ENCODE measurements at regions of chr3 and their contacts with region 1.

Region 1: DNA sequence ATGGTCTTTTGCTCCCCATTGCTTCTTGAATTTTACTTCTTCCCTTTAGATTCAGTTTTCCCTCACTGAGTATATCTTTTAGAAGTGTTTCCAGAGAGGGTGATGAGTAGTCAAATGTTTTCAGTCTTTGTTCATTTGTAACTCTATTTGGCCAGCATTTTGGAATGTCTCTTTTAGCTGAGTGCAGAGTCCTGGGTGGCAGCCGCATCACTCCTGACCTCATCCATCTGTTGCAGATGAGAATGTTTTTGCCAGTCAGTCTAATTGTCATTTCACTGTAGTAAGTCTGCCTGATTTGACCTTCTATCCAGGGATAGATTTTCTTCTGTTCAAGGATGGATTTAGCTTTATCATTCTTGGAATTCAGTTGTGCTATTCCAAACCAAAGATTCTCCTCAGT is 7.3 kb downstream of the SRPRB start:
- DNase-seq: no peak
- H3K4me3 ChIP-seq: no peak overlapping the region
- H3K27ac ChIP-seq: no peak overlapping the region
- H3K4me1 ChIP-seq: no peaks in the 10 kb centered on the region
- H3K27me3 ChIP-seq: no peaks in the 10 kb centered on the region
- CTCF ChIP-seq: no peak

Region 2: DNA sequence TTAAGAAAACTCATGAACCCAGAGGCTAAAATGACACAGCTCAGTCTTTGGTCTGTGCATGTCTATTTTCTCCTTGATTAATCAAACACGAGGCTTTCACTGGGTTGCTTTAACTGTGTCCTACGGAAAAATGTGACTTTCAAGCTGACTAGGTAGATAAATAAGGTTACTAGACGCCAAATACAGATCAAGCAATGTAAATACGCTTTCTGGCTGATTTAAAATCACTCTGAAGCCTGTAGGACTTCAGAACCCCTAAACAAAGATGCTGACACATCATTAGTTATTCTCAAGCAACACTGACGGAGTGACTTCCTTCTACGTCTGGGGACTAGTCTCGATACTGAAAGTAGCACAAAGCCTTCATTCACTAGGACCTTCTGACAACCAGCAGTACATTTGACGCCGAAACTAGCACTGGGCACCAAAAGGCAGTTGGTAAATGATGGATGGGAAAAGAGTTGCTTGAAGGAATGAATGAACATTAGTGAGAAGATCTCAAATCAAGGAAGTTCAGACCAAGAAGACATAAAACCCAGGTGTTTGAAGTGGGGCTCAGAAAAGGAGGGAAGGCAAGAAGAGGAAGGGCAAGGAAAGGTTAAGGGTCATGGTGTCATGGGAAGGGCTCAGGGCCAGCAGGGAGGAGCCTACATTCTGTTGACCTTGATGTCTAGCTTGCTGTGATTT is 306.5 kb before region 1 on chr3:
- intact Hi-C with region 1: no loop called
- DNase-seq: no peak
- H3K4me3 ChIP-seq: no peak overlapping the region
- H3K27ac ChIP-seq: peak overlapping the region; percentile 3
- H3K4me1 ChIP-seq: no peaks in the 10 kb centered on the region
- H3K27me3 ChIP-seq: no peaks in the 10 kb centered on the region
- CTCF ChIP-seq: no peak

Region 3: DNA sequence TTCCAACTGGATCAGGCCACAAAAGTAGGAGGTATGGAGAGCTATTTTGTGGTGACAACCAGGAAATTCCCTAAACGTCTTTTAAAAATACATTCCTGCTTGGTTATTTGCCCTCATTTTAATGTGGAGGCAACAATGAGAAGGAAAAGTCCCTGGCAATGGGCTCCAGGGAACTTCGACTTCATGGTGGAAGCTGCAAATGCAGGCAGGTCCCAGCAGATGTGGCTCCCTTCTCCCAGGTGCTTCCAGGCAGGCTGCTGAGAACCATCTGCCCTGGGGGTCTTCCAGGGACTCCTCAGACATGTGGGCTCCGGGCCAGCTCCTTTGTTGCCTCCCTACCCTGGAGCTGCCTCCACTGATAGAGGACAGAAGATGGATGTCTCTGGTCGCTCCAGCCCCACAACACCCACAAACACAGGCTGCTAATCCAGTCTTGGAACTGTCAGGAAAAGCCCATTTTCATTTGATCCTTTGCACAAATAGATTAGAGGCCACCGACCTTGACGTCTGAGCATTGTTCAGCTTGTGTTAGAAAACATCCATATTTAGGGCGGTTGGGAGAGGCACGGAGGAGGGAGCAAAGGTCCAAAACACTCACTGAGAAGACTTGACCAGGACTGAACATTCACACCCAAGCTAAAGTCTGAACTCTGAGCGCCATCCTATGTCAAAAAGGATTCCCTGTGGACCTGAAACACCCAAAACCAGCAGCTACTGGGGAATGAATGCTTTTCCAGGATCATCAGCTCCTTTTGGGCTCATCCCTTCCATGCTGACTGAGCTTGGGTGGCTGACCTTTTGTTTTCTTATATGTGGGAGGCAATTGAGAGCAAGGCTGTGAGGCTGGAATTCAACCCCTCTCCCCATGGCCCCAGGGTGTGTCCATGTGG is 247.0 kb after region 1 on chr3:
- intact Hi-C with region 1: loop called (anchors 10 kb)
- DNase-seq: peak; percentile 52
- H3K4me3 ChIP-seq: no peak overlapping the region
- H3K27ac ChIP-seq: no peak overlapping the region
- H3K4me1 ChIP-seq: peaks cover 8% of the 10 kb centered on the region
- H3K27me3 ChIP-seq: no peaks in the 10 kb centered on the region
- CTCF ChIP-seq: no peak